ENCODE measurements at regions of chr19 and their contacts with region 1.

Region 1: GRCh38 chr19:46147791-46148288 is at the start of gene IGFL2:
- DNase-seq: no peak
- H3K4me3 ChIP-seq: no peak within 1 kb of the TSS
- H3K4me3 Mint-ChIP-seq: no peak within 1 kb of the TSS
- H3K27ac ChIP-seq: no peak within 1 kb of the TSS
- H3K27ac Mint-ChIP-seq: peak within 1 kb of the TSS in 1 of 7 donors; percentile 1
- H3K4me1 ChIP-seq: no peaks in the 10 kb centered on the region
- H3K4me1 Mint-ChIP-seq: peaks cover 0 to 2% (median 0%) of the 10 kb centered on the region in 4 donors
- H3K27me3 ChIP-seq: no peaks in the 10 kb centered on the region
- H3K27me3 Mint-ChIP-seq: peaks cover 30 to 39% of the 10 kb centered on the region in 2 donors
- total RNA-seq, gene IGFL2: 0.47 TPM in 1 of 2 experiments, not detected in the other

Region 2: DNA sequence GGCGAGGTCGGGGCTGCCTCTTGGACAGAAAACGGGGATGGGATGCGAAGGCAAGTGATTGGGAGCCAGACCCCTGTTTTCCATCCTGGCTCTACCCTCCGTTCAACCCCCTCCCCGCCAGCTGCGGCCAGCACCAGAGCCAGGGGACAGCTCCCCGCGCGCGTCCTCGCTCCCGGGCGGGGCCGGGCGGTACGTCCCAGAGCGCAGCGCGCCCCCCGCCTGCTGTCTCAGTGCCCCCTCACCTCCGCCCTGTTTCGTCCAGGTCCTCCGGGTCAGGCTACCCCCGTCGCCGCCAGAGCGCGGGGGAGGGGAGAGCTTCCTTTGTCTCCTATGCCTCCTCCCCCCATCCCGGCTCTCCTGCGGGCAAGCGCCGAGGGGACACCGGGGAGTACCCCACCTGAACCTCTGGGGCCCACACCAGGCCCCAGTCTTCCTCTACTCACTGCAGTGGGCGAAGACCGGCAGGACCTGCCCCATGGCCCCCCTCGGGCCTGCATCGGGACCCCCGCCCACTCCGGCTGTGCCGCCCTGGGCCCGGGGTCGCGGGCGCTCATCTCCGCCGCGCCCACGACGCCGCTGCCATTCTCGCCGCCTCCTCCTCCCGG is 651.4 kb before region 1 on chr19:
- CTCF ChIA-PET with region 1: no interaction called
- POLR2A ChIA-PET with region 1: no interaction called
- intact Hi-C with region 1: no loop called
- DNase-seq: peak; percentile 26 to 55 (median 44)
- H3K4me3 ChIP-seq: peak overlapping the region; percentile 23 to 54
- H3K4me3 Mint-ChIP-seq: peak overlapping the region; percentile 57 to 79 (median 69)
- H3K27ac ChIP-seq: no peak overlapping the region
- H3K27ac Mint-ChIP-seq: peak overlapping the region in 1 of 7 donors; percentile 91
- H3K4me1 ChIP-seq: peaks cover 44% of the 10 kb centered on the region
- H3K4me1 Mint-ChIP-seq: peaks cover 23 to 58% (median 41%) of the 10 kb centered on the region in 4 donors
- H3K27me3 ChIP-seq: peaks cover 10% of the 10 kb centered on the region
- H3K27me3 Mint-ChIP-seq: peaks cover 5 to 7% of the 10 kb centered on the region in 2 donors

Region 3: GRCh38 chr19:46134527-46134926 is 13.3 kb before region 1 on chr19:
- CTCF ChIA-PET with region 1: no interaction called
- POLR2A ChIA-PET with region 1: no interaction called
- intact Hi-C with region 1: loop called (anchors 1 kb)
- DNase-seq: no peak
- H3K4me3 ChIP-seq: no peak overlapping the region
- H3K4me3 Mint-ChIP-seq: no peak overlapping the region
- H3K27ac ChIP-seq: no peak overlapping the region
- H3K27ac Mint-ChIP-seq: no peak overlapping the region
- H3K4me1 ChIP-seq: no peaks in the 10 kb centered on the region
- H3K4me1 Mint-ChIP-seq: no peaks in the 10 kb centered on the region
- H3K27me3 ChIP-seq: peaks cover 4% of the 10 kb centered on the region
- H3K27me3 Mint-ChIP-seq: peaks cover 24 to 28% of the 10 kb centered on the region in 2 donors

Region 4: DNA sequence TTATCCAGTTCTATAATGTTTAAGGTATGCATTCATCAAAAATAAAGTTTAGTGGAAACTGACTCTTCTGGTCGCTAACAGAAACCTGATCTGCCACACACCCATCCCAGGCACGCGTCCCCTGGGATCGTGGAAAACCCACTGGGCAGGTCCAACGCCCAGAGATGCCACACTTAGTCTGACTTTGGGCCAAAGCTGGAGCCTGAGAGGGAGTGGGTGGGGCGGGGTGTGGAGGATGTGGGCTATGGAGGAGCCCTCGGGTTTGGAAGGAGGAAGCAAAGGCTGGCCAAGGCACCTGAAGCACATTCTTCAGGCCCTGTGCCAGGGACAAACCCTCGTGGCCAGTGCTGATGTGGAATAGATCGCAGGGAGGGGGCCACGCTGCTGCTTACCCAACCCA is 84.2 kb after region 1 on chr19:
- CTCF ChIA-PET with region 1: no interaction called
- POLR2A ChIA-PET with region 1: no interaction called
- intact Hi-C with region 1: no loop called
- DNase-seq: no peak
- H3K4me3 ChIP-seq: no peak overlapping the region
- H3K4me3 Mint-ChIP-seq: no peak overlapping the region
- H3K27ac ChIP-seq: no peak overlapping the region
- H3K27ac Mint-ChIP-seq: peak overlapping the region in 1 of 7 donors; percentile 37
- H3K4me1 ChIP-seq: no peaks in the 10 kb centered on the region
- H3K4me1 Mint-ChIP-seq: no peaks in the 10 kb centered on the region
- H3K27me3 ChIP-seq: no peaks in the 10 kb centered on the region
- H3K27me3 Mint-ChIP-seq: peaks cover 8 to 38% of the 10 kb centered on the region in 2 donors

Measured in CD4-positive, alpha-beta memory T cell (primary cell).